ENCODE measurements at regions of chr18 and their contacts with region 1.

Region 1: GRCh38 chr18:21968338-21968737 is 201.1 kb upstream of the GATA6 start:
- DNase-seq: no peak
- ATAC-seq: no peak
- H3K4me3 ChIP-seq: no peak overlapping the region
- H3K27ac ChIP-seq: no peak overlapping the region
- H3K4me1 ChIP-seq: no peaks in the 10 kb centered on the region
- CTCF ChIP-seq: no peak
- EP300 ChIP-seq: no peak
- POLR2A ChIP-seq: no peak
- RAD21 ChIP-seq: no peak

Region 2: GRCh38 chr18:21955757-21956652 is 12.3 kb before region 1 on chr18:
- CTCF ChIA-PET with region 1: interaction called, 12 read pairs
- POLR2A ChIA-PET with region 1: no interaction called
- DNase-seq: peak; percentile 59 to 61
- ATAC-seq: peak; percentile 94 to 97
- H3K4me3 ChIP-seq: no peak overlapping the region
- H3K27ac ChIP-seq: no peak overlapping the region
- H3K4me1 ChIP-seq: no peaks in the 10 kb centered on the region
- CTCF ChIP-seq: peak; percentile 66
- EP300 ChIP-seq: no peak
- POLR2A ChIP-seq: no peak
- RAD21 ChIP-seq: peak; percentile 46 to 57; a peak in 4 of 5 replicates

Measured in A549 (cell line).